Breast epithelium (tissue), 4 donors: ENCODE measurements at regions of chr17 and their contacts with region 1.

Region 1: GRCh38 chr17:74444406-74444805 is 12.5 kb downstream of the GPRC5C start:
- DNase-seq: no peak
- H3K4me3 ChIP-seq: no peak overlapping the region
- H3K27ac ChIP-seq: peak overlapping the region; percentile 93 to 95
- H3K4me1 ChIP-seq: peaks cover 9 to 29% of the 10 kb centered on the region in 2 donors
- H3K27me3 ChIP-seq: no peaks in the 10 kb centered on the region
- CTCF ChIP-seq: no peak
- POLR2A ChIP-seq: no peak

Region 2: GRCh38 chr17:74430706-74431567 is 13.5 kb before region 1 on chr17:
- intact Hi-C with region 1: loop called (anchors 1 kb)
- DNase-seq: peak; percentile 70 to 83
- H3K4me3 ChIP-seq: peak overlapping the region; percentile 50 to 83 (median 80)
- H3K27ac ChIP-seq: peak overlapping the region; percentile 98
- H3K4me1 ChIP-seq: peaks cover 0 to 17% of the 10 kb centered on the region in 2 donors
- H3K27me3 ChIP-seq: no peaks in the 10 kb centered on the region
- CTCF ChIP-seq: no peak
- POLR2A ChIP-seq: no peak

Region 3: DNA sequence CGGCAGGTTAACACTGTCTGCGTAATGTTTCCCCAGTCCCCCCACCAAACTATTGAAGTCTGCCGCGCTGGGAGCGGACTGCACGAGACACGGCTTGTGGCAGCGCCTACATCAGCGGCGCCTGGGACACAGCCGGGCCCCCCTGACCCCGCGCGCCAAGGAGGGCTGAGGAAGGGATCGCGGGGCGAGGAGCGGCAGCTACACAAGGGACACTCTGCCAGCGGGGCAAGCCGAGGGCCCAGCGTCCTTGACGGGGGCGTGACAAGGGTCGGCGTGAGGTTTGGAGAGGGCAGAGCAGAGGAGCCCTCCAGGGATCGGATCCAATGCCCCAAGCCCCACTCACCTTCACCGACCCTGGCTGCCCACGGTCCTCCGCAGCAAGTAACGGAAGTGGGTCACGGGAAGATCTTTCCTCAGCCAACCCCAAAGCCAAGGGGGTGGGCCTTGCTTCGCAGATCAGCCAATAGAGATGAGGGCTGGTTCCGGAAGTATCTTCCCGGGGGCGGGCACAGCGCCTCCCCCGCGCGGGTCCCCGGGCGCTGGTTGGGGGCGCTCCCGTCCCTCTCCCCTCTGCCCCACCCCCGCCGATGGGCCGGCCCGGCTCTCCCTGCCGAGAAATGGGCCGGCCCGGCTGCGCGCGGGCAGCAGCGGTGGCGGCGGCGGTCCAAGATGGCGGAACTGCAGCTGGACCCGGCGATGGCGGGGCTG is 602.3 kb after region 1 on chr17 and contains the starts of genes ATP5PD and KCTD2:
- intact Hi-C with region 1: no loop called
- DNase-seq: peak; percentile 96 to 97
- H3K4me3 ChIP-seq: peak within 1 kb of the TSS; percentile 58 to 97 (median 95)
- H3K27ac ChIP-seq: peak within 1 kb of the TSS; percentile 94 to 99
- H3K4me1 ChIP-seq: peaks cover 0 to 12% of the 10 kb centered on the region in 2 donors
- H3K27me3 ChIP-seq: no peaks in the 10 kb centered on the region
- CTCF ChIP-seq: no peak
- POLR2A ChIP-seq: peak; percentile 88
- total RNA-seq, gene ATP5PD: 190 to 268 (median 222) TPM
- total RNA-seq, gene KCTD2: 23.5 to 28.4 (median 24.6) TPM